Esophagus muscularis mucosa (tissue), 4 donors: ENCODE measurements at regions of chr10 and their contacts with region 1.

Region 1: DNA sequence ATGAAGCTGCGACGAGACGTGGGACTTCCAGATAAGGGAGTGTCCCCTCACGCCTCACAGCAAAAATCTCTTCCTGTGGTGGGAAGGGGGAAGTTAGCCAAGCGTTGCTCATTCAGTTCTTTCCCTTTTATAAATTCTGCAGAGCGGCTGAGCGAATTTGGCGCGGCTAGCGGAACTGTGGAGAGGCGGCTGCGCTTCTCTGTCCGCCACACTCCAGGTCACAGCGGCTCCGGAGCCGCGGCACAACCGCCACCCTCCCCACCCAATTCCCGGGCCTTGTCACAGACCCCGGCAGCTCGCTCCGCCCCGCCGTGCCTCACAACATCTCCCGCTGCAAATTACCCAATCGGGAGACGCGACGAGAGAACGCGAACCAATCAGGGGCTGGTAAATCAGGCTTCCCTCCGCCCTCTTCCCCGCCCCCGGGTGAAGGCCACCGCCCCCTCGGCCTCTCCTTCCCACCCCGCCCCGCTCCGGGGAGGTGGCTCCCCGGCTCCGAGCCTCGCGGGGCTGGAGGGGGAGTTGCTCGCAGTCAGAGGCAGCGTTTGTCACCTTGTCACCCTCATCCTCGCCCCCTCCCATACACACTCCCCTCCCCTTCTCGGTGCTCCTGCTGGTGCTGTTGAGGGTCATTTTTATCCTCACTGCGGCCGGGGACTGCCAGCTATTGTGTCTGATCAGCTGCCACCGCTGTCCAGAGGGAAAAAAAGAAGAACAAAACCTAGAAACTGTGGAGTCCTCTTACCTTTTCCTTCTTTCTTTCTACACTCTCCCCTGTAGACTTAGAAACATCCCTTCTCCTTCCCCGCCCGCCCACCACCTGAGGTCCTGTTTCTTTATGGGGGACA is 918 bp upstream of the ARHGAP21 start:
- DNase-seq: peak; percentile 99
- H3K4me3 ChIP-seq: peak overlapping the region; percentile 64 to 91 (median 86)
- H3K27ac ChIP-seq: peak overlapping the region; percentile 94 to 98 (median 98)
- H3K4me1 ChIP-seq: peaks cover 26 to 33% (median 29%) of the 10 kb centered on the region in 4 donors
- H3K27me3 ChIP-seq: no peaks in the 10 kb centered on the region
- CTCF ChIP-seq: no peak
- EP300 ChIP-seq: no peak
- POLR2A ChIP-seq: peak; percentile 85

Region 2: GRCh38 chr10:24331457-24331856 is 393.1 kb before region 1 on chr10:
- intact Hi-C with region 1: no loop called
- DNase-seq: no peak
- H3K4me3 ChIP-seq: no peak overlapping the region
- H3K27ac ChIP-seq: peak overlapping the region in 2 of 4 donors; percentile 35 to 46
- H3K4me1 ChIP-seq: peaks cover 9 to 14% (median 12%) of the 10 kb centered on the region in 4 donors
- H3K27me3 ChIP-seq: no peaks in the 10 kb centered on the region
- CTCF ChIP-seq: no peak
- EP300 ChIP-seq: no peak
- POLR2A ChIP-seq: no peak

Region 3: GRCh38 chr10:24465891-24466818 is 258.4 kb before region 1 on chr10:
- intact Hi-C with region 1: no loop called
- DNase-seq: no peak
- H3K4me3 ChIP-seq: no peak overlapping the region
- H3K27ac ChIP-seq: no peak overlapping the region
- H3K4me1 ChIP-seq: peaks cover 18 to 37% (median 34%) of the 10 kb centered on the region in 4 donors
- H3K27me3 ChIP-seq: no peaks in the 10 kb centered on the region
- CTCF ChIP-seq: no peak
- EP300 ChIP-seq: no peak
- POLR2A ChIP-seq: no peak

Region 4: GRCh38 chr10:24642622-24643417 is 81.8 kb before region 1 on chr10:
- intact Hi-C with region 1: loop called (anchors 5 kb)
- DNase-seq: no peak
- H3K4me3 ChIP-seq: no peak overlapping the region
- H3K27ac ChIP-seq: no peak overlapping the region
- H3K4me1 ChIP-seq: peaks cover 3 to 14% (median 10%) of the 10 kb centered on the region in 4 donors
- H3K27me3 ChIP-seq: no peaks in the 10 kb centered on the region
- CTCF ChIP-seq: peak; percentile 67 to 85 (median 76)
- EP300 ChIP-seq: no peak
- POLR2A ChIP-seq: no peak

Region 5: GRCh38 chr10:24784061-24784460 is 59.5 kb after region 1 on chr10:
- intact Hi-C with region 1: no loop called
- DNase-seq: no peak
- H3K4me3 ChIP-seq: no peak overlapping the region
- H3K27ac ChIP-seq: no peak overlapping the region
- H3K4me1 ChIP-seq: no peaks in the 10 kb centered on the region
- H3K27me3 ChIP-seq: no peaks in the 10 kb centered on the region
- CTCF ChIP-seq: no peak
- EP300 ChIP-seq: no peak
- POLR2A ChIP-seq: no peak

Region 6: DNA sequence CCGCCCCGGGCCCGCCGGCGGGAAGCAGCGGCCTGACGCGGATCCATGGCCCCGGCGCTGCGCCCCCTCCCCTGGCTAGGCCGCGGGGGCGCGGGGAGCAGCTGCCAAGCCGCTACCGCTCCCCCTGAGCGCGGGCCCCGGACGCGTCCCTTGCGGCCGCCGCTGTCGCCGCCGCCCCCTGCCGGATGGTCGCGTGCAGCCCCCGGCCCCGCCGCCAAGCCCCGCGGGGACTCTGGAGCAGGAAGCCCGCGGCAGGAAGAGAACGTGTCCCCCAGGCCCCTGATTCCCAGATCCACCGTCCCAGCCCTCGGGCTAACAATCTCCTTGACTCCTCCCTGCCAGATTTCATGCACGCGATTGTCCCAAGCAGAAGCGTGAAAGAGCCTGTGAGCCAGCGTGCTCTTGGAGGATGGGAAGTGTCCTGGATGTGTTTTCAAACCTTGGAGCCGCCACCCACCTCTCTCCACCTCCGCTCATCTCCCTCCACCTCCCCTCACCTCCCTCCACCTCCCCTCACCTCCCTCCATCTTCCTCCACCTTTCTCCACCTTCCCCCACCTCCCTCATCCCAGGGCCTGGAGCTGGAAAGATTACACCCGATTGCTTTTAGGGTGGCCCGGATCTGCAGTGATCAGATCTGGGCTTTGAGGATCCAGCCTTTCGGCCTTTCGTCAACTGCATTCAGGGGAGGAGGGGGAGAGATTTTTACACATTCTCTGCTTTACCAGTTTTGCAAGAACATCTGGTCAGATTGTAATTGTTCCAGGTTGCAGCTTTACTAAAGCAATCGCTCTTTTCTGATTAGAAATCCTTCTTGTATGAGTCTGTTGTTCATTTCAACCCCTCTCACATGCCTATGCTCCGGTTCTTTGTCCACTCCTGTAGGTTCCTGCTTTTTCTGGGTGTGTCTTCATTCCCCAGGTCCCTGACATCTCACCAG is 228.4 kb after region 1 on chr10:
- intact Hi-C with region 1: loop called (anchors 5 kb)
- DNase-seq: peak; percentile 83
- H3K4me3 ChIP-seq: peak overlapping the region; percentile 72 to 82 (median 74)
- H3K27ac ChIP-seq: peak overlapping the region; percentile 72 to 86 (median 83)
- H3K4me1 ChIP-seq: peaks cover 1 to 47% (median 28%) of the 10 kb centered on the region in 4 donors
- H3K27me3 ChIP-seq: no peaks in the 10 kb centered on the region
- CTCF ChIP-seq: peak; percentile 28 to 44 (median 35)
- EP300 ChIP-seq: no peak
- POLR2A ChIP-seq: no peak

Region 7: DNA sequence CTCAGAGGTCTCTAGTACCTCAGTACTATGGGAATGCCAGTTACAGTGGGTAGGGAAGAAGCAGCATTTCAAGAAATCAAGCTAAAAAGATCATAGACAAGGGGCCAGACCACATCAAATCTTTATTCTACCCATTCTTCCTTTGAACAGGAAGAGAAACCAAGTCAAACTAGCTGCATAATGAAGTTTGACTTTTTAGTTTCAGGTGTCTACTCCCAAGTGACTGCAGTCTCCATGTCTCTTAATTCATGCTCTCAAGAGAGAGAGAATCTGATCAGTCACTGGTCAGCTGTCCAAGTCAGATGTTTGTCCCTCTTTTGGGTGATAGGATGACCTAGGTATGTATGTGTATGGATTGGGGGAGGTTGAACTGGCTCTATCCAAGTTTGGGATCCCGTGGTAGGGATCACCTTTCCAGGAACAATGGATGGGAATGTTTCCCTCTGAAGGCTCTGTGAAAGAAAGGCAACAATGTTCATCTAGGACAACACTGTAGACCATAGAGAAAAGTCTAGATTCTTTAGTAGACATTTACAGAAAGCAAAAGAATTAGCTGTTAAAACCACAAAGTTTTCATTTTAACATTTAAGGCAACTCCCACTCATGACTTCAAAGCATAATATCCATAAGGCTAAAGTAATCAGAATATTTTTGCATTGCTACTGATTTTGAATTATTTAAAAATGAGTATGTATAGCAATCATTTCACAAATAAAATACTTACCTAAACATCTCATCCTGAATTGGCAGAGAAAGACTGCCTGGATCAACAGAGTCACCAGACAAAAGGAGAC is 257.9 kb after region 1 on chr10:
- intact Hi-C with region 1: no loop called
- DNase-seq: no peak
- H3K4me3 ChIP-seq: no peak overlapping the region
- H3K27ac ChIP-seq: no peak overlapping the region
- H3K4me1 ChIP-seq: peaks cover 0 to 9% (median 0%) of the 10 kb centered on the region in 4 donors
- H3K27me3 ChIP-seq: no peaks in the 10 kb centered on the region
- CTCF ChIP-seq: no peak
- EP300 ChIP-seq: no peak
- POLR2A ChIP-seq: no peak

Region 8: DNA sequence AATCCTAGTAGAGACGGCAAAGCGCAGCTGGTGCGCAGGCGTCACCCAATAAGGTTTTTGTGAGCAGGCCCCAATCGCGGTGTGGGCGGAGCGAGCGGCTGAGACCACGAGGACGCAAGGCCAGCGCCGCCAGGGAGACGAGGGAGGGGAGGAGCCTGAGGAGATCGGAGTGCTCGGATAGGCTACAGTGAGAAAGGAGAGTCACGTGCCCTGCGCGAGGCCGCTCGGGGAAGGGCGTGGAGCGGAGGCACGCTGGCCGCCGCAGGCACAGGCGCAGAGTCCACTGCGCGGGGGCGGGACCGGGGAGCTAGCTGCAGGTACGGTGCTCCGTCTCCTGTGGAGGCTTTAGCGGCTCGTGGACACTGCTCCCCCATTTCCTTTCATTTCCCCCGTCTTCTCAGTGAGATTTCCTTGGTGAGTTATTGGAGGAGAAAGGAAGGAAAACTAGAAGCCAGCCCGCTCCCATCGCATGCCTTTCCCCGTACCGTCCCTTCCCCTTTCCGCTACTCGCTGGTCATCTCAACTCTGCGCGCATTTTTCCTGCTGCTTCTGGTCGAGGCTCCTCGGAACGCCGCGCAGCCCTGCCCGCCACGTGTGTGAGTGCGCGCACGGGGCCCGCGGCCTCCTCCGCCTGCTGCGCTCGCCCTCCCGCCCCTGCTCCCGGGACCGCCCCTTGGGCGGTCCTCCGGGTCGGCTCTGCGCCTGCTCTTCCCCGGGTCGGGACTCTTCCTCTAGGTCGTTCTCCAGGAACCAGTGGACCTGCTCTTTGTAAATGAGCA is 292.0 kb after region 1 on chr10 and contains the start of gene THNSL1:
- intact Hi-C with region 1: loop called (anchors 5 kb)
- DNase-seq: peak; percentile 99
- H3K4me3 ChIP-seq: peak within 1 kb of the TSS; percentile 62 to 79 (median 72)
- H3K27ac ChIP-seq: peak within 1 kb of the TSS; percentile 74 to 95 (median 91)
- H3K4me1 ChIP-seq: peaks cover 4 to 22% (median 14%) of the 10 kb centered on the region in 4 donors
- H3K27me3 ChIP-seq: no peaks in the 10 kb centered on the region
- CTCF ChIP-seq: no peak
- EP300 ChIP-seq: no peak
- POLR2A ChIP-seq: peak; percentile 67
- total RNA-seq, gene THNSL1: 0.65 to 1.1 (median 0.75) TPM

Region 9: DNA sequence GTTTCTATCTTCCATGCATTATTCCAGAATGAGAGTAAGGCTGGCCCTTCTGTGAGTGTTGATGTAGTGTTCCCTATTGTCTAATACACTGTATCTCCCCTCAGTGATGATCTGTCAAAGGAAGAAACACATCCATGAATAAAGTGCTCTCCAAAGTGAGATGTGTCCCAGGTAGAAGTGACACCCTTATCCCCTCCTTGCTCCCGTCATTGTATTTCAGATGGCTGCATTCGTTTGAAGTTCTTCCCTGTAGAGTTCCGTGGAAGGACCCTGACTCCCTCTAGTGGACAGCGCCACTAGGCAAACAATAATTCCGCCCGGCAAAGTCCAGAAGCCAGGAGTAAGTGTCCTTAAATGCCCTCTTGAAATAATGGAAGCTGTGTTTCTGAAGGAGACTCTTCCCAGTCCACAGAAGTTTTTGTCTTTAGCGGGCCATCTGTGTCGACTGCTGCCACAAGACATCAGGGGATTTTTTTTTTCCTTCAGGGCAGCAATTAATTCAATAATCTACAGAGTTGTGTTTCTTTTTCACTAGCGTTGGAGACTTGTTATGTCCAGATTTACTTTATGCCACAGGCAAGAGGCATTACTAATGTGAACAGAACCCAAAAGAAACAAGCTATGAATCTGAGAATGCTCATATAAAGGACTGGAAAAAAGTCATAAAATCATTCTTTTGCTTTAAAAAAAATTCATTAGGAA is 356.4 kb after region 1 on chr10:
- intact Hi-C with region 1: loop called (anchors 5 kb)
- DNase-seq: peak; percentile 93
- H3K4me3 ChIP-seq: no peak overlapping the region
- H3K27ac ChIP-seq: no peak overlapping the region
- H3K4me1 ChIP-seq: peaks cover 0 to 14% (median 11%) of the 10 kb centered on the region in 4 donors
- H3K27me3 ChIP-seq: no peaks in the 10 kb centered on the region
- CTCF ChIP-seq: peak; percentile 82 to 92 (median 85)
- EP300 ChIP-seq: no peak
- POLR2A ChIP-seq: no peak